Activated CD4-positive, alpha-beta T cell treated with anti-CD3 and anti-CD28 coated beads for 36 hours (primary cell): ENCODE measurements at regions of chr6 and their contacts with region 1.

Region 1: DNA sequence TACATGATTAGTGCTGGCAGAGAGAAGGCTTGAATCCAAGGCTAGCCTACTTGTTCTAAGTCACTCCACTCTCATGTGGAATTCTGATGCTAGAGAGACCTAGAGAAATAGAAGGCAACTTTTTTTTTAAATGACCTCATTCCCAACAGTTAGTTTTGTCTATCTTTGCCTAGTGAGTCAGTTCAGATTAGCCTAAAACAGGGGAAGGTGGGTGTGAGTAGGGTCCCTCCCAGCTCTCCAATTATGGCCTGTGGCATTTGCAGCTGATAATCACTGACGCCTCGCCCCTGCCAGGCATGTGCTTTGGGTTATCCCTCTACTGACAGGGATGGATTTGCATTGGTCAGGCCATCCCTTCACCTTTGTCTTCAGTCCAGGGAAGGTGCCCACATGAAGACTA is 13.6 kb downstream of the TXLNB start:
- DNase-seq: no peak
- ATAC-seq: no peak
- H3K4me3 Mint-ChIP-seq: no peak overlapping the region
- H3K27ac Mint-ChIP-seq: no peak overlapping the region
- H3K4me1 Mint-ChIP-seq: peaks cover 28% of the 10 kb centered on the region
- H3K27me3 Mint-ChIP-seq: no peaks in the 10 kb centered on the region

Region 2: GRCh38 chr6:138882369-138883017 is 395.7 kb before region 1 on chr6:
- CTCF ChIA-PET with region 1: no interaction called
- POLR2A ChIA-PET with region 1: interaction called, 13 read pairs
- intact Hi-C with region 1: no loop called
- DNase-seq: peak; percentile 39
- ATAC-seq: peak; percentile 82
- H3K4me3 Mint-ChIP-seq: no peak overlapping the region
- H3K27ac Mint-ChIP-seq: peak overlapping the region; percentile 62
- H3K4me1 Mint-ChIP-seq: peaks cover 11% of the 10 kb centered on the region
- H3K27me3 Mint-ChIP-seq: no peaks in the 10 kb centered on the region